Sciatic nerve (tissue), 2 donors: ENCODE measurements at regions of chr18 and their contacts with region 1.

Region 1: DNA sequence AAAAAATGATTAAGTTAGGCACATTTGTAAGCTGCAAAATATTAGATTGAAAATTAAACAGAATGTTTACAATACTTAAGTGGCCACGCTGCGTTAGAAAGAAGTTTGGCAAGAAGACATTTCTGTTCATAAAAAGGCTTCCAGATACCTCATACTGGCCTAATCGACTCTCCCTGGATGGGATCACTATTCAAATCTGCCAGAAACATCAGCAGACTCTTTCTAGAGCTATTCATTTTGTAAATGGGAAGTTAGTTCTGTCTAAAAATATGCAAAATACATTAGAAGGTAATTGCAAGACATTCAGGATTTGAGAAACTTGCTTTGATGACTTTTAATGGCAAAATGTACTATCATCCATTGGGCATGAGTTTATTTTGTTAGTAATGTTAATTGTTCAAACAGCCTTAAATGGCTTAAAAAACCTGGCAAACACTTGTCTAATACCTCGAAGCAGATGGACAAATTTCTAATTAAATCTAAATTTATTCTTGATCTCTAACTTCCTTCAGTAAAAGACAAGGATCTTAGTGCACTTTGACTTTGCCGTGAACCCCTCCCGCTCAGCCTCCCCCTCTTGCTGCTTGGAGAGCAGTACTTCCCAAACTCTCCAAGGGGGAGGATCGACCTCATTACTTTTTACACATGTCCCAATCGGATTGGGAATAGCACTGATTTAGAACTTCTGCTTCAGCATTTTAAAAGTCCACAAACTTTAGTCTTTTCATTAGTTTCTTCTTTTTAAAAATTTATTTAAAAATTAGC is 103.5 kb downstream of the SMIM21 start:
- DNase-seq: no peak
- ATAC-seq: no peak

Region 2: DNA sequence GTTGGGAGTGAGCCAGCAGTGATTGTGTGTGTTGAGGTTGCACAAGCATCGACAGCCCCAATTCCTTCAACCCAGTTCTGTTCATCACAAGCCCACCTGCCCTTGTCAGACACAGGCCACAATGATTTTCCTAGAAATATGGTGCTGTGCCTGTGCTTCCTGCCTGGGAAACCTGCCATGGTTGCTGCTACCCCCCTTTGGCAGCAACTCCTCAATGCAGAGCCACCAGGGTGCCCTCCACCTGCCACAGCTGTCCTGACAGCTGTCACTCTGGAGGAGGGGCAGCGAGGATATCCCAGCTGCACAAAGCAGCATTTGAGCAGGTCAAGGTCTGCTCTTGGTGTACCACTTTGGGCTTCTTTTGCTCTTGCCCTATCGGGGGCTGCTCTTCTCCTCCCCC is 76.4 kb after region 1 on chr18:
- intact Hi-C with region 1: loop called (anchors 2 kb)
- DNase-seq: no peak
- ATAC-seq: no peak